Activated CD4-positive, alpha-beta memory T cell treated with anti-CD3 and anti-CD28 coated beads for 36 hours (primary cell): ENCODE measurements at regions of chr10 and their contacts with region 1.

Region 1: GRCh38 chr10:3095373-3096139 is 28.2 kb downstream of the PFKP start:
- DNase-seq: peak; percentile 80
- H3K4me3 Mint-ChIP-seq: peak overlapping the region; percentile 17
- H3K27ac Mint-ChIP-seq: peak overlapping the region; percentile 87
- H3K4me1 Mint-ChIP-seq: peaks cover 74% of the 10 kb centered on the region
- H3K27me3 Mint-ChIP-seq: no peaks in the 10 kb centered on the region

Region 2: GRCh38 chr10:1809139-1809741 is 1286.3 kb before region 1 on chr10:
- CTCF ChIA-PET with region 1: no interaction called
- POLR2A ChIA-PET with region 1: no interaction called
- intact Hi-C with region 1: no loop called
- DNase-seq: no peak
- H3K4me3 Mint-ChIP-seq: no peak overlapping the region
- H3K27ac Mint-ChIP-seq: no peak overlapping the region
- H3K4me1 Mint-ChIP-seq: no peaks in the 10 kb centered on the region
- H3K27me3 Mint-ChIP-seq: peaks cover 4% of the 10 kb centered on the region

Region 3: DNA sequence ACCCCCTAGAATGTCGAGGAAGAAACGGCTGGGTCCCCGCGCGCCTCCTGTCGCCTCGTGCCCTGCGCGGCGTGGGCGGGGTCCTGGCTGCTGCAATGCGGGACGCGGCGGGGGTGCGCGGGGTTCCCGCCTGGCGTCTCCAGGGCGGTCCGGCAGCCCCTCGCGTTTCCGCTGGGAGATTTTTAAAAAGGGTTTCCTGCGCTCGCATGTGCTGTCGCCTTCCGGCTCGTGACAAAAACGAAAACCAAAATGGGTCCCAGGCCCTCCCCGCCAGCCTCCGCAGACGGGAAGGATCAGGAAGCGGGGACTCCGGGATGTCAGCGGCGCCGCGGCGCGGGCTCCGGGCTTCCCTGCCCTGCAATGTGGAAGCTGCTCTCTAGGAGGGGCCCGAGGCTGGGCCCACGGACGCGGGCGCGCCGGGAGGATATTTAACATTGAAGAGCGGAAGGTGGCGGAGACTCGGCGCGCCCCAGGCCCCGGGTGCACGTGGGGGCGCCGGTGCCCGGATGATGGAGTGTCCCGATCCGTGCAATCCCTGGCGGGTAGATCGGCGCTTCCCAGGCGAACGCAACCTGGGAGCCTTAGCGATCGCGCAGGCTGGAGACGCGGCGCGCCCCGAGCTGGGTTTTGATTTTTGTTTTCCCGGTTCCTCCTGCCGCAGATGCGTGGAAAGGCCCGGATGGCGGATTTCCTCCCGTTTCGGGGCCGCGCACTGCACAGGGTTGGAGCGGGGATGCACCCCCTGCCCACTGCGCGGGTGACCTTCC is 27.2 kb before region 1 on chr10:
- CTCF ChIA-PET with region 1: interaction called, 11 read pairs
- POLR2A ChIA-PET with region 1: interaction called, 16 read pairs
- intact Hi-C with region 1: loop called (anchors 1 kb)
- DNase-seq: peak; percentile 79
- H3K4me3 Mint-ChIP-seq: peak overlapping the region; percentile 88
- H3K27ac Mint-ChIP-seq: peak overlapping the region; percentile 88
- H3K4me1 Mint-ChIP-seq: peaks cover 41% of the 10 kb centered on the region
- H3K27me3 Mint-ChIP-seq: peaks cover 6% of the 10 kb centered on the region

Region 4: GRCh38 chr10:3151889-3152565 is 56.5 kb after region 1 on chr10:
- CTCF ChIA-PET with region 1: no interaction called
- POLR2A ChIA-PET with region 1: no interaction called
- intact Hi-C with region 1: no loop called
- DNase-seq: no peak
- H3K4me3 Mint-ChIP-seq: no peak overlapping the region
- H3K27ac Mint-ChIP-seq: peak overlapping the region; percentile 44
- H3K4me1 Mint-ChIP-seq: peaks cover 11% of the 10 kb centered on the region
- H3K27me3 Mint-ChIP-seq: no peaks in the 10 kb centered on the region

Region 5: GRCh38 chr10:3172446-3173170 is 77.1 kb after region 1 on chr10 and contains the start of gene PITRM1:
- CTCF ChIA-PET with region 1: no interaction called
- POLR2A ChIA-PET with region 1: interaction called, 5 read pairs
- intact Hi-C with region 1: loop called (anchors 1 kb)
- DNase-seq: peak; percentile 99
- H3K4me3 Mint-ChIP-seq: peak within 1 kb of the TSS; percentile 86
- H3K27ac Mint-ChIP-seq: peak within 1 kb of the TSS; percentile 86
- H3K4me1 Mint-ChIP-seq: peaks cover 27% of the 10 kb centered on the region
- H3K27me3 Mint-ChIP-seq: no peaks in the 10 kb centered on the region
- total RNA-seq, gene PITRM1: 103 to 109 TPM

Region 6: DNA sequence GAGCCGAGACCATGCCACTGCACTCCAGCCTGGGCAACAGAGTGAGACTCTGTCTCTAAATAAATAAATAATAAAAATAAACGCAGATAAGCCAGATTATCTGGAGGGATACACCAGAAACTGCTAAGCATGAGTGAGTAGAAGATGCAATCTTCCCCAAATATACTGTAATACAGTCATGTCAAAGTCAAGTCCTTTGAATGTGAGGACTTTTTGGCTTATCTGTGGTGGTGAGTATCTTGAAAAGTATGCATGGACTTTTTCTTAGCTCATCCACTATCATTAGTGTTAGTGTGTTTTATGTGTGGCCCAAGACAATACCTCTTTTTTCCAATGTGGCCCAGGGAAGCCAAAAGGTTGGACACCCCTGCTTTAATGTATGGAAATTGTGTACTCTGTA is 121.7 kb after region 1 on chr10:
- CTCF ChIA-PET with region 1: no interaction called
- POLR2A ChIA-PET with region 1: no interaction called
- intact Hi-C with region 1: no loop called
- DNase-seq: no peak
- H3K4me3 Mint-ChIP-seq: no peak overlapping the region
- H3K27ac Mint-ChIP-seq: no peak overlapping the region
- H3K4me1 Mint-ChIP-seq: no peaks in the 10 kb centered on the region
- H3K27me3 Mint-ChIP-seq: no peaks in the 10 kb centered on the region

Region 7: DNA sequence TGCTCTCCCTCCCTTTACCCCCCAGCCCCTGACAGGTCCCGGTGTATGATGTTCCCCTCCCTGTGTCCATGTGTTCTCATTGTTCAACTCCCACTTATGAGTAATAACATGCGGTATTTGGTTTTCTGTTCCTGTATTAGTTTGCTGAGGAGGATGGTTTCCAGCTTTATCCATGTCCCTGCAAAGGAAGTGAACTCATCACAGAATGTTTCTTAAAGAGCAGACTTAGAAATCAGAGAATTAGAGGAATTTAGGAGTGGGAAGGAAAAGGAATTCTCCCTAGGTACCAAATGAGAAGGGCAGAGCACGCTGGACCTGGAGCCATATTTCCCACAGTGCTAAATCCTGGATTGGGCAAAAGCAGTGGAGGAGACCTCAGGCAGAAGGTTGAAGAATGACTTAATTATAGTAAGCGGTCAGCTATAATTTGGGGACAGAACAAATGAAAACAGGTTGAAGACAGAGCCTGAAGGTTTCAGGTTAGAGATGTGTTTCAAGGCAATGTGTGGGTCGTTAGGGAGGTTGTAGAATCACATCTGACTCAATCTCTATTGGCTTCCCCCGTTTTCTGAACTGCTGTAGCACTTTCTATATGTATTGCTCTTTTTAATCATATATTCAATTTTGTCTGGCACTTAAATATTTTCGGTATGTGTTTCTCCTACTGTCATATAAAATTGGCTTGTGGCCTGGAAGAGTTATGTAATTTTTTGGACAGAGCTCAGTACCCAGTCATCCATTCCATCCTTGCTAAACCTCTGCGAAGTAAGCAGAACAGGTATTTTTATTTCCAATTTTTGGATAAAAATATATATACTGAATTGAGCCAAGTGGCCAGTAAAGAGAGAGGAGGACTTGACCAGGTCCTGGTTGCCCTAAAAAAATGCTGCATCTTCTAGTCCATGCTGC is 900.0 kb after region 1 on chr10:
- CTCF ChIA-PET with region 1: no interaction called
- POLR2A ChIA-PET with region 1: no interaction called
- intact Hi-C with region 1: no loop called
- DNase-seq: no peak
- H3K4me3 Mint-ChIP-seq: no peak overlapping the region
- H3K27ac Mint-ChIP-seq: no peak overlapping the region
- H3K4me1 Mint-ChIP-seq: peaks cover 9% of the 10 kb centered on the region
- H3K27me3 Mint-ChIP-seq: no peaks in the 10 kb centered on the region